Activated B cell treated with CpG ODN at 0.5 μM for 24 hours (primary cell): ENCODE measurements at regions of chr7 and their contacts with region 1.

Region 1: GRCh38 chr7:152436111-152436930 is 518 bp upstream of the KMT2C start:
- DNase-seq: peak; percentile 85
- ATAC-seq: peak; percentile 64
- H3K4me3 Mint-ChIP-seq: peak overlapping the region; percentile 83
- H3K27ac Mint-ChIP-seq: peak overlapping the region; percentile 84
- H3K4me1 Mint-ChIP-seq: peaks cover 29% of the 10 kb centered on the region
- H3K27me3 Mint-ChIP-seq: no peaks in the 10 kb centered on the region
- CTCF ChIP-seq: no peak

Region 2: DNA sequence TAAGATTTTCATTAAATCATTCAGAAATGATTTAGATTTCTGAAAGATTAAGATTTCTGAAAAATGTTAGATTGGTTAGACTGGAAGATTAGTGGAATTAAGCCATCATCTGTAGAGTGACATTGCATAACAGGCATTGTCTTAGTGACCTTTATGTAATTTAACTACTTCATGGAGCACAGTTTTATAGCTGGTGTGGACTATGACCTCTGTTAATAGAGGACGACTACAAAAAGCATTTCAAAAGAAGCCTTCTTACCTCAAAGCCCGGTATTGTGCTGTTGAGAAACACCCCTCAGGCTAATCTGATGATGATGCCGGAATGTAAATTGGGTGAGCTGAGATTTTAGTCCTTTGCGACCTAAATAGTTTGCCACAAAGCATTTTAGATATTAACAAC is 355.2 kb before region 1 on chr7:
- CTCF ChIA-PET with region 1: no interaction called
- POLR2A ChIA-PET with region 1: no interaction called
- intact Hi-C with region 1: no loop called
- DNase-seq: no peak
- ATAC-seq: no peak
- H3K4me3 Mint-ChIP-seq: no peak overlapping the region
- H3K27ac Mint-ChIP-seq: no peak overlapping the region
- H3K4me1 Mint-ChIP-seq: peaks cover 23% of the 10 kb centered on the region
- H3K27me3 Mint-ChIP-seq: no peaks in the 10 kb centered on the region
- CTCF ChIP-seq: no peak

Region 3: GRCh38 chr7:152120210-152120609 is 316.1 kb before region 1 on chr7:
- CTCF ChIA-PET with region 1: no interaction called
- POLR2A ChIA-PET with region 1: no interaction called
- intact Hi-C with region 1: no loop called
- DNase-seq: no peak
- ATAC-seq: no peak
- H3K4me3 Mint-ChIP-seq: no peak overlapping the region
- H3K27ac Mint-ChIP-seq: no peak overlapping the region
- H3K4me1 Mint-ChIP-seq: no peaks in the 10 kb centered on the region
- H3K27me3 Mint-ChIP-seq: no peaks in the 10 kb centered on the region
- CTCF ChIP-seq: no peak

Region 4: DNA sequence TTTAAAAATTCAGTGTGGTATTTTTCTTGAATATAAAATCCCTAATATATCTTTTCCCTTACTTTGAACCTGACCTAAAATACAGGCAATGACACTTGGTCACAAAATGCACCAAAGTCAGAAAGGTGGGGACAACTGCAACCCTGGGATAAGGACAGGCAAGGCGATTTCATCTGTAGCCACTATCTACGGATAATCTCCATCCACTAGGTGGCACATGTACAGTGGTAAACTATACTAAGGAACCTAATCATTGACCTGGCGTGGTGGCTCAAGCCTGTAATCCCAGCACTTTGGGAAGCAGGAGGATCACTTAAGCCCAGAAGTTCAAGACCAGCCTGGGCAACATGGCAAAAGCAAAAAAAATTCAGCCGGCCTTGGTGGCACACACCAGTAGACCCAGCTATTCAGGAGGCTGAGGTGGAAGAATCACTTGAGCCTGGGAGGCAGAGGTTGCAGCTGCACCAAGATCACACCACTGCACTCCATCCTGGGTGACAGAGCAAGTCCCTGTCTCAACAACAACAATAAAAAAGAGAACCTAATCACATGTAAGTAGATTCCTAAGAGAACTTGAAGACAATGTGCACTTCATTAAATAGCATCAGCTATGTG is 99.5 kb before region 1 on chr7:
- CTCF ChIA-PET with region 1: interaction called, 11 read pairs
- POLR2A ChIA-PET with region 1: interaction called, 3 read pairs
- intact Hi-C with region 1: loop called (anchors 2 kb)
- DNase-seq: no peak
- ATAC-seq: peak; percentile 45
- H3K4me3 Mint-ChIP-seq: no peak overlapping the region
- H3K27ac Mint-ChIP-seq: no peak overlapping the region
- H3K4me1 Mint-ChIP-seq: peaks cover 63% of the 10 kb centered on the region
- H3K27me3 Mint-ChIP-seq: no peaks in the 10 kb centered on the region
- CTCF ChIP-seq: peak; percentile 49

Region 5: DNA sequence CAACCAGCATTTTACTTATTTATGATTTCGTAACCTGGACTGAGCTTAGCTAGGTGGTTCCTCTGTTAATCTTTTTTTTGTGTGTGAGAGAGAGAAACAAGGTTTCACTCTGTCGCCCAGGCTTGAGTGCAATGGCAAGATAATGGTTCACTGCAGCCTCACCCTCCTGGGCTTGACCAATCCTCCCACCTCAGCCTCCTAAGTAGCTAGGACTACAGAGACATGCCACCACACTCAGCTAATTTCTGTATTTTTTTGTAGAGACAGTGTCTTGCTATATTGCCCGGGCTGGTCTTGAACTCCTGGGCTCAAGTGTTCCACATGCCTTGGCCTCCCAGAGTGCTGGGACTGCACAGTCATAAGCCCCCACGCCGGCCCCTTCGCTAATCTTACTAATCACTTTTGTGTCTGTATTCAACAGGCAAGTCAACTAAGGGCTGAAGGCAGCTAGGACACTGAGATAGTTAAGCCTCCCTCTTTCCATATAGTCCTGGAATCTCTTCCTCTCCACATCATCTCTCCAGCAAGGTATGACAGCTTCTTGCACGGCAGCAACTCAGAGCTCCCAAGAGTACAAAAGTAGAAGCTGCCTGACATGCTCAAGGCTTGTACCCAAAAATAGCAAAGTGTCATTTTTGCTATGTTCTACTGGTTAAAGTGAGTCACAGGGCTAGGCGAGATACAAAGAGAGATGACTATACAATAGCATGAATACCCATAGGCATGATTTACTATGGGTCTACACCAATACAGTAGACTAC is 11.8 kb before region 1 on chr7:
- CTCF ChIA-PET with region 1: interaction called, 3 read pairs
- POLR2A ChIA-PET with region 1: interaction called, 8 read pairs
- intact Hi-C with region 1: loop called (anchors 2 kb)
- DNase-seq: no peak
- ATAC-seq: peak; percentile 61
- H3K4me3 Mint-ChIP-seq: no peak overlapping the region
- H3K27ac Mint-ChIP-seq: no peak overlapping the region
- H3K4me1 Mint-ChIP-seq: peaks cover 68% of the 10 kb centered on the region
- H3K27me3 Mint-ChIP-seq: no peaks in the 10 kb centered on the region
- CTCF ChIP-seq: no peak

Region 6: DNA sequence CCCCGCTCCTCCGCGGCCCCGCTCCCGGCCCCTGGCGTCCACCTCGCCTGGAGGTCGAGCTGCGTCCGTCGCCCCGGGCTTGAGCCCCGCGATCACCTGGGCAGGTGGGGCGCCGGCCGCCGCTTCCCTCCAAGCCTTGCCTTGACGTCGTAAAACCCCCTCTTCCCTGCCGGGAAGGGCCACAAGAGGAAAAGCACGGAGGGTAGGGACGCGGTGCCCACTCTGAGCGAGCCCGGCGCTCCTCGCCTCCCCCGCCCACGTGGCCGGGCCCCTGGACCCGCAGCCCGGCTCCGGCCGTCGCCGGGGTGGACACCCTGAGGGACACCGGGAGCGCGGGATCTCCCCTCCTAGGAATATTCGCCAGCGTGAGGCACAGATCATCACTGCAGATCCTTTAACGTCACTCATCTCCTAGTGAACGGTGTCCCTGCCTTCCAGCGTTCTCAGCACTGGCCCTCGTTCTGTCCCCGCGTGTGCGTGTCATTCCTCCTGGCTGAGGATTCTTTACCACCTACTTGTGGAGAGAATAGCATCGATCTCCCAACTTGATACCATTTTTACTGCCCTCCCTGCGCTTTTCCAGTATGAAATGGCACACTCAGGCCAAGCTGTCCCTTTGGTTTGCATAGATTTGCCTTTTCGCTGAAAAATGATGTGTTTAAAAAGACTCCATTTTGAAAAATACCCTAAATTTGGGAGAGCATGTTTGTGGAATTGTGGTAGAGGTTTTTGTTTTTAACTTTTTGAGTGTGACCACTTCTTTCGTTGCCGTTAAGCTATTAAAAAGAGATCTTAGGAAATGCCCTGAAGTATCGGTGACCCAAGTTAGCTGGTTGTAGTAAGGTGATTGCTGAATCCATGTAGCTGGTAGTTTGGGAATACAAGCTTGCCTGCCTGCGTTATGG is 323.9 kb after region 1 on chr7:
- CTCF ChIA-PET with region 1: no interaction called
- POLR2A ChIA-PET with region 1: no interaction called
- intact Hi-C with region 1: loop called (anchors 1 kb)
- DNase-seq: no peak
- ATAC-seq: peak; percentile 17
- H3K4me3 Mint-ChIP-seq: peak overlapping the region; percentile 91
- H3K27ac Mint-ChIP-seq: peak overlapping the region; percentile 77
- H3K4me1 Mint-ChIP-seq: peaks cover 21% of the 10 kb centered on the region
- H3K27me3 Mint-ChIP-seq: no peaks in the 10 kb centered on the region
- CTCF ChIP-seq: no peak